ENCODE measurements at regions of chr4 and their contacts with region 1.

Region 1: GRCh38 chr4:80184053-80184790 is 13.1 kb upstream of the PRDM8 start:
- DNase-seq: peak; percentile 84 to 94
- ATAC-seq: peak; percentile 89 to 98 (median 93)
- H3K4me3 ChIP-seq: peak overlapping the region; percentile 90
- H3K4me3 Mint-ChIP-seq: peak overlapping the region; percentile 99
- H3K27ac ChIP-seq: peak overlapping the region; percentile 82
- H3K27ac Mint-ChIP-seq: peak overlapping the region; percentile 82 to 93
- H3K4me1 ChIP-seq: peaks cover 32% of the 10 kb centered on the region
- H3K4me1 Mint-ChIP-seq: peaks cover 35 to 36% of the 10 kb centered on the region in 2 donors
- H3K27me3 ChIP-seq: no peaks in the 10 kb centered on the region
- H3K27me3 Mint-ChIP-seq: peaks cover 14 to 33% of the 10 kb centered on the region in 2 donors
- CTCF ChIP-seq: peak; percentile 99

Region 2: DNA sequence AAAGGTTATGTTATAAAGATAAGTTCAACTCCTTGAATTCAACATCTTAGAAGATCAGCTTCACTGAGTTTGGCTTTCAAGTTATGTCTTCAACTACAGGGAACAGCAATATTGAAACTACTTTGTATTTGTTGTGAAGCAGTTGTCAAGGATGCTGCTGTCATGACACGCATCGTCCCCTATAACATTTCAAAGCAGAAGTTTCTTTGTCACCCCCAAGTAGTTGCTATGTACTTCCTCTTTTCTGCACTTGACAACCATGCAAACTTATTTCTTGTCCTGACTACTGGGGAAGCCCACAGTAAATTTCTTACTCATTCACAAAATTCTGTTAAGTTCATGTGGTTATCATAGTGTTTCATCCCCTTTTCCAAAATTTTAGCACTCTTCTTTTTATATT is 125.5 kb before region 1 on chr4:
- intact Hi-C with region 1: loop called (anchors 5 kb)
- DNase-seq: peak in 1 of 2 donors; percentile 90
- ATAC-seq: peak; percentile 93 to 97 (median 96)
- H3K4me3 ChIP-seq: peak overlapping the region; percentile 11
- H3K4me3 Mint-ChIP-seq: peak overlapping the region; percentile 74
- H3K27ac ChIP-seq: peak overlapping the region; percentile 80
- H3K27ac Mint-ChIP-seq: peak overlapping the region; percentile 90 to 95
- H3K4me1 ChIP-seq: peaks cover 6% of the 10 kb centered on the region
- H3K4me1 Mint-ChIP-seq: peaks cover 11 to 12% of the 10 kb centered on the region in 2 donors
- H3K27me3 ChIP-seq: no peaks in the 10 kb centered on the region
- H3K27me3 Mint-ChIP-seq: no peaks in the 10 kb centered on the region
- CTCF ChIP-seq: no peak

Region 3: DNA sequence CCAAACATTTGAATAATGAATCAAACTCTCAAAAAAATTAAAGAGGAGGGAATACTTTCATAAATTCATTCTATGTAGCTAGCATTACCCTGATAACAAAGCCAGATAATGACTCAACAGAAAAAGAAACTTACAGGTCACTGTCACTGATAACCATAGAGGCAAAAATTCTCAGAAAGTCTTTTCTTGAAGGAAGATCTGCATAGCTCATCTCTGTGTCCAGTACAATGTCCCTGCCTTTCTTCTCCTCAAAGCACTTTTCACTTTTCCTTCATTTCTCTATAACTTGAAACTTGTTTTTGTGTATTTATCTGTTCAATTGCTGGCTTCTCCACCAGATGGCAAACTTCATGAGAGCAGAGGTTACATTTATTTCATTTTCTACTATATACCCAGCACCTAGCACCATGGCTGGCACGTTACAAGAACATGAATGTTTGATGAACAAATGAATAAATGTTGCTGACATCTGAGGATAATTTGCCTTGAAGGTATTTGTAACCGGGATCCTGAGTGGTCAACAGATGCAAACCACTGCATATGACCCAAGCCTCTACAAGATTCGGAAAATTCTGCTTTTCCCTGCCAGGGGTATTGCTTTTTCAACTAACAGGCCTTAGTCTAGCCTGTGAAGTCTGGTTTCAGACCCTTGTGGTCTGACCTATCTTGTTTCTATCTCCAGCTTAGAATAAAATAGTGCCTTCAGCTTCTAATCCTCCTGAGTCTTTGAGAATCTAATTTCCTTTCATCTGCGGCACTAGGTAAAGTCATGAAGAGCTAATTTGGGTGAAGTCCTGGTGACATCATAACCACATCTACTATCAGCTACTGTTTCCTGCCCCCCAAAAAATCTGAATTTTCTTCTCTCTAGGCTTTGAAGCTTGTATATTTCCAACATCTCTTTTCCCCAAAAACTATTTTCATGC is 58.7 kb before region 1 on chr4:
- intact Hi-C with region 1: loop called (anchors 5 kb)
- DNase-seq: peak in 1 of 2 donors; percentile 80
- ATAC-seq: peak; percentile 67 to 74 (median 68)
- H3K4me3 ChIP-seq: no peak overlapping the region
- H3K4me3 Mint-ChIP-seq: no peak overlapping the region
- H3K27ac ChIP-seq: peak overlapping the region; percentile 69
- H3K27ac Mint-ChIP-seq: peak overlapping the region; percentile 17 to 20
- H3K4me1 ChIP-seq: peaks cover 12% of the 10 kb centered on the region
- H3K4me1 Mint-ChIP-seq: peaks cover 22 to 23% of the 10 kb centered on the region in 2 donors
- H3K27me3 ChIP-seq: no peaks in the 10 kb centered on the region
- H3K27me3 Mint-ChIP-seq: no peaks in the 10 kb centered on the region
- CTCF ChIP-seq: peak; percentile 37

Region 4: DNA sequence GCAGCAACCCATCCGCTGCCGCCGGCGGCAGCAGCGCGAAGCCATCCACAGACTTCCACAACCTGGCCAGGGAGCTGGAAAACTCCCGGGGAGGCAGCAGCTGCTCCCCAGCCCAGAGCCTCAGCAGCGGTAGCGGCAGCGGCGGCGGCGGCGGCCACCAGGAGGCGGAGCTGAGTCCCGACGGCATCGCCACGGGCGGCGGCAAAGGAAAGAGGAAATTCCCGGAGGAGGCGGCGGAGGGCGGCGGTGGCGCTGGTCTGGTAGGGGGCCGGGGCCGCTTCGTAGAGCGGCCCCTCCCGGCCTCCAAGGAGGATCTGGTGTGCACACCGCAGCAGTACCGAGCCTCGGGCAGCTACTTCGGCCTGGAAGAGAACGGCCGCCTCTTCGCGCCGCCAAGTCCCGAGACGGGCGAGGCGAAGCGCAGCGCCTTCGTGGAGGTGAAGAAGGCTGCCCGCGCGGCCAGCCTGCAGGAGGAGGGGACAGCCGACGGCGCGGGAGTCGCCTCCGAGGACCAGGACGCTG is 18.0 kb after region 1 on chr4:
- intact Hi-C with region 1: loop called (anchors 2 kb)
- DNase-seq: peak; percentile 69 to 83
- ATAC-seq: peak; percentile 76 to 81 (median 77)
- H3K4me3 ChIP-seq: peak overlapping the region; percentile 71
- H3K4me3 Mint-ChIP-seq: peak overlapping the region; percentile 83
- H3K27ac ChIP-seq: peak overlapping the region; percentile 73
- H3K27ac Mint-ChIP-seq: peak overlapping the region in 1 of 2 donors; percentile 66
- H3K4me1 ChIP-seq: peaks cover 22% of the 10 kb centered on the region
- H3K4me1 Mint-ChIP-seq: peaks cover 17 to 32% of the 10 kb centered on the region in 2 donors
- H3K27me3 ChIP-seq: peaks cover 2% of the 10 kb centered on the region
- H3K27me3 Mint-ChIP-seq: peaks cover 23 to 31% of the 10 kb centered on the region in 2 donors
- CTCF ChIP-seq: peak; percentile 76

Region 5: DNA sequence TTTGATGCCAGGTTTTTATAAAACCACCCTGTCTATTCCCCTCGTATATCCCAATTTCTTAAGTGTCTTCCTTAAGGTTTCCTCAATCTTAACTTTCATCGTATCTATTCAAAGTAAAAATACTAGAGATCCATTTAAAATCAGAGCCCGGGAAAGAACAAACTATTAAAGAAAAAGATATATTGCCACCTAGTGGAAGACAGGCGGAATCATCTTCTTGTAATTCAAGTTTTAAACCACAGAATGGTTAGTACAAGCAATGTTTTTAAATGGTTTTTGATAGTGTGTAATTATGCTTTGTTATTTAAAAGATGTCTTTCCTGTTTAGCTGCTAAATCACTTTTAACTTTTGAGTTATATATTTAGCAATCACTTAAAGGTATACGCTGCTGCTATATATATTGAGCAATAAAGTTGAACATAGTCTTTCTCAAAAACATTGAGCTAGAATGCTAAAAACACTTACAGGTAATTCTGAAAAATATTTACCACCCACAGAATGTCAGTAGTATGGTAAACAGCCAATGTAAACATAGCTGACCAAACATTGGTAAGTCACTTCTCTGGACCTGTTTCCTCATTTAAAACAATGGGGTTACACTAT is 31.3 kb after region 1 on chr4:
- intact Hi-C with region 1: loop called (anchors 1 kb)
- DNase-seq: peak in 1 of 2 donors; percentile 56
- ATAC-seq: peak in 2 of 3 donors; percentile 34 to 51
- H3K4me3 ChIP-seq: no peak overlapping the region
- H3K4me3 Mint-ChIP-seq: no peak overlapping the region
- H3K27ac ChIP-seq: no peak overlapping the region
- H3K27ac Mint-ChIP-seq: no peak overlapping the region
- H3K4me1 ChIP-seq: no peaks in the 10 kb centered on the region
- H3K4me1 Mint-ChIP-seq: no peaks in the 10 kb centered on the region
- H3K27me3 ChIP-seq: peaks cover 6% of the 10 kb centered on the region
- H3K27me3 Mint-ChIP-seq: peaks cover 8 to 32% of the 10 kb centered on the region in 2 donors
- CTCF ChIP-seq: peak; percentile 88